Activated B cell treated with CpG ODN at 0.5 μM for 24 hours (primary cell): ENCODE measurements at regions of chr4 and their contacts with region 1.

Region 1: GRCh38 chr4:86934771-86935565 is at the start of gene AFF1:
- DNase-seq: peak; percentile 79
- ATAC-seq: peak; percentile 71
- H3K4me3 Mint-ChIP-seq: peak within 1 kb of the TSS; percentile 94
- H3K27ac Mint-ChIP-seq: peak within 1 kb of the TSS; percentile 96
- H3K4me1 Mint-ChIP-seq: peaks cover 56% of the 10 kb centered on the region
- H3K27me3 Mint-ChIP-seq: no peaks in the 10 kb centered on the region
- CTCF ChIP-seq: no peak
- total RNA-seq, gene AFF1: 60.0 and 60.8 TPM in 2 replicates

Region 2: DNA sequence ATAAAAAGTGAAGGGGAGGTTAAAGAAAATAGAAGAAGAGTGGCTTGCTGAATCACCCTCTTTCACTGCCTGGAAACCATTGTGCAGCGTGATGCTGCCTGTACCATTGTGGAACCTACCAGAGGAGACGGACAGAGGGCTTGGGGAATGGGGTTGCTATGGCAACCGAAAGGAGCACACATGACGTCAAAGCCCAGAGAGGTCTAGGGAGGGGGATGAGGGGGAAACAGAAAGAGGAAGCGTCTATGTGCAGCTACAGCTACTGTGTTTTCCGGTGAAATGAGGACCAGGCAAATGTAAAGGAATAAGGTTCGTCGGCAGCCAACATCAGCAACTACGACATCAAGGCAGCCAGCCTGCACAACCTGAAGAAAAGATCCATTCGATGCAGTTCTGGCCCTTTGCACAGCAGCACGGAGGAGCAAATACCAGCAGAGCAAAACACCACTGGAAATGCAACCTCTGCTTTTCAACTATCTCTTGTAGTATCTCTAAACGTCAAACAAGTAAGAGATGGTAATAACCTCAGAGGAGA is 575.0 kb before region 1 on chr4 and contains the start of gene MAPK10:
- CTCF ChIA-PET with region 1: no interaction called
- POLR2A ChIA-PET with region 1: no interaction called
- intact Hi-C with region 1: loop called (anchors 1 kb)
- DNase-seq: peak; percentile 55
- ATAC-seq: peak; percentile 98
- H3K4me3 Mint-ChIP-seq: peak within 1 kb of the TSS; percentile 83
- H3K27ac Mint-ChIP-seq: peak within 1 kb of the TSS; percentile 79
- H3K4me1 Mint-ChIP-seq: peaks cover 18% of the 10 kb centered on the region
- H3K27me3 Mint-ChIP-seq: no peaks in the 10 kb centered on the region
- CTCF ChIP-seq: no peak
- total RNA-seq, gene MAPK10: 0.20 and 0.75 TPM in 2 replicates

Region 3: GRCh38 chr4:86999136-86999643 is 64.2 kb after region 1 on chr4:
- CTCF ChIA-PET with region 1: interaction called, 26 read pairs
- POLR2A ChIA-PET with region 1: interaction called, 256 read pairs
- intact Hi-C with region 1: loop called (anchors 1 kb)
- DNase-seq: no peak
- ATAC-seq: no peak
- H3K4me3 Mint-ChIP-seq: peak overlapping the region; percentile 6
- H3K27ac Mint-ChIP-seq: peak overlapping the region; percentile 42
- H3K4me1 Mint-ChIP-seq: peaks cover 49% of the 10 kb centered on the region
- H3K27me3 Mint-ChIP-seq: no peaks in the 10 kb centered on the region
- CTCF ChIP-seq: no peak

Region 4: GRCh38 chr4:87026800-87027495 is 92.0 kb after region 1 on chr4:
- CTCF ChIA-PET with region 1: interaction called, 3 read pairs
- POLR2A ChIA-PET with region 1: interaction called, 14 read pairs
- intact Hi-C with region 1: loop called (anchors 1 kb)
- DNase-seq: no peak
- ATAC-seq: peak; percentile 94
- H3K4me3 Mint-ChIP-seq: peak overlapping the region; percentile 56
- H3K27ac Mint-ChIP-seq: peak overlapping the region; percentile 89
- H3K4me1 Mint-ChIP-seq: peaks cover 65% of the 10 kb centered on the region
- H3K27me3 Mint-ChIP-seq: no peaks in the 10 kb centered on the region
- CTCF ChIP-seq: no peak

Region 5: GRCh38 chr4:87220094-87220822 is 285.3 kb after region 1 on chr4 and contains the start of gene KLHL8:
- CTCF ChIA-PET with region 1: interaction called, 4 read pairs
- POLR2A ChIA-PET with region 1: interaction called, 21 read pairs
- intact Hi-C with region 1: loop called (anchors 1 kb)
- DNase-seq: peak; percentile 93
- ATAC-seq: peak; percentile 92
- H3K4me3 Mint-ChIP-seq: peak within 1 kb of the TSS; percentile 95
- H3K27ac Mint-ChIP-seq: peak within 1 kb of the TSS; percentile 93
- H3K4me1 Mint-ChIP-seq: peaks cover 17% of the 10 kb centered on the region
- H3K27me3 Mint-ChIP-seq: no peaks in the 10 kb centered on the region
- CTCF ChIP-seq: no peak
- total RNA-seq, gene KLHL8: 10.5 and 12.6 TPM in 2 replicates

Region 6: DNA sequence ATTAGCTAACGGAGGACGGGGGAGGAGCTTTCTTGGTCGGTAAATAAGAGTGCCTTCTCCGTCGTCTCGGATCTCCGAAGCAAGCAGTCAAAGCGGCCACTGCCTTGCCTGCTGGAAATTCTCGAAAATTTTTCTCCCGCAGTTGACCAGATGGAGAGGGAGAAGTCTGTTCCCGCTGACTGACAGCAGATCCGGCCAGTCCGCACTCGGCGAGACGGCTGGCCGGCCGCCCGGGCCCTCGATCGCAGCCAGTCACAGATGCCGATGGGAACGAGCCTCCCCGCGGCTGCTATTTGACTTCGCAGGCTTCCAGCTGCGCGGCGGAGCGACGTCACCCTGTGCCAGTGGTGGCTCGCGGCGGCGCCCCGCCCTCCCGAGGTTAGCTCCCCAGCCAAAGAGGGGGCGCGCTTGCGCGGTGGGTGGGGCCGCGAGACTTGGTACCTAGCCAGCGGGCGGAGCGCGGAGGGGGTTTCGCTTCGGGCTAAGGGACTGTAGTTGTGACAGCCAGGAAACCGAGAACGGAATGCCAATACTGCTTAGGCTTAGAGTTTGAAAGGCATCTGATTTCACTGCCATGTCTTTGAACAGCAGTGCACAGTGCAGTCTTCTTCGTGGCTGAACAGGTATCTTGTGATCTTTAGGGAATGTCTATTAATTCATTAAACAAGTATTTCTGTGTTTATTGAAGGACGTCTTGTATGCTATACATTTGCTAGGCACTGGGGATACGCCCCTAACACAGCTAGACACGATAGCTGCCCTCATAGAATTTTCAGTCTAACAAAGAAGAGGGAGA is 1349.7 kb after region 1 on chr4 and contains the start of gene PPM1K:
- CTCF ChIA-PET with region 1: no interaction called
- POLR2A ChIA-PET with region 1: interaction called, 7 read pairs
- intact Hi-C with region 1: loop called (anchors 10 kb)
- DNase-seq: peak; percentile 99
- ATAC-seq: peak; percentile 81
- H3K4me3 Mint-ChIP-seq: peak within 1 kb of the TSS; percentile 98
- H3K27ac Mint-ChIP-seq: peak within 1 kb of the TSS; percentile 99
- H3K4me1 Mint-ChIP-seq: peaks cover 54% of the 10 kb centered on the region
- H3K27me3 Mint-ChIP-seq: no peaks in the 10 kb centered on the region
- CTCF ChIP-seq: no peak
- total RNA-seq, gene PPM1K: 72.1 and 76.6 TPM in 2 replicates